ENCODE measurements at regions of chr12 and their contacts with region 1.

Region 1: DNA sequence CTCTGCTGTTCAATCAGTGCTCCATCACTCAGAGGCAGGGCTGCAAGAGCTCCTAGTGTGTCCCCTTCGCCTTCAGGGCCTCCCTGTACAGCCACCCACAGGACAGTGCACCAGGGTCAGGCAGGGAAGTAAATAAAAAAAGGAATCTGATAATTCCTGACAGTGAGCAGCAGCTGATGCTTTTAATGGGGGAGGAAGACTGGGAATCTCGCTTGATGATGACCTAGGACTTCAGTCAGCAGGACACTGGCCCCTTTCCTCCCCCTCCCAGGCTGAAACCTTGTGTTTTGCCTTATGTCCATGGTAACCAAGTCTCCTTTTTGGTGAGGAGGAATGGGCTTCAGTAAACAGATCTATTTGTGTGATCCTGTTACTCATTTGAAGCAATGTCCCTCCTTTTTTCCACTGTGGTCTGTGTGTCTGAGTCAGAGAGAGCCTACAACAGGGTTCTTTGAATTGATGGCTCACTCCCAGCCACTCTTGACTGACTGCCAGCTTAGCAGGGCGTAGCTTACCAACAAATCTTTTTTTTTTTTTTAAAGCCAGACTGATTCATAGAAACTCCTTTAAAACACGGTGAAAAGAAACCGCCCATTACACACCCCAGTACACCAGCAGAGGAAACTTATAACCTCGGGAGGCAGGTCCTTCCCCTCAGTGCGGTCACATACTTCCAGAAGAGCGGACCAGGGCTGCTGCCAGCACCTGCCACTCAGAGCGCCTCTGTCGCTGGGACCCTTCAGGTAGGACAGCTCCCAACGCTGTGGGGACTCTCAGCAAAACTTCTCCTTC is at the start of gene EMP1:
- DNase-seq: peak; percentile 32
- ATAC-seq: peak; percentile 92
- H3K4me3 Mint-ChIP-seq: peak within 1 kb of the TSS; percentile 75
- H3K27ac Mint-ChIP-seq: peak within 1 kb of the TSS; percentile 50
- H3K4me1 Mint-ChIP-seq: peaks cover 31% of the 10 kb centered on the region
- H3K27me3 Mint-ChIP-seq: peaks cover 38% of the 10 kb centered on the region
- CTCF ChIP-seq: no peak
- total RNA-seq, gene EMP1: 0.39 TPM in 1 of 2 replicates, not detected in the other

Region 2: GRCh38 chr12:11958221-11959091 is 1237.9 kb before region 1 on chr12:
- CTCF ChIA-PET with region 1: no interaction called
- POLR2A ChIA-PET with region 1: no interaction called
- intact Hi-C with region 1: no loop called
- DNase-seq: no peak
- ATAC-seq: no peak
- H3K4me3 Mint-ChIP-seq: no peak overlapping the region
- H3K27ac Mint-ChIP-seq: no peak overlapping the region
- H3K4me1 Mint-ChIP-seq: peaks cover 3% of the 10 kb centered on the region
- H3K27me3 Mint-ChIP-seq: peaks cover 13% of the 10 kb centered on the region
- CTCF ChIP-seq: no peak

Region 3: DNA sequence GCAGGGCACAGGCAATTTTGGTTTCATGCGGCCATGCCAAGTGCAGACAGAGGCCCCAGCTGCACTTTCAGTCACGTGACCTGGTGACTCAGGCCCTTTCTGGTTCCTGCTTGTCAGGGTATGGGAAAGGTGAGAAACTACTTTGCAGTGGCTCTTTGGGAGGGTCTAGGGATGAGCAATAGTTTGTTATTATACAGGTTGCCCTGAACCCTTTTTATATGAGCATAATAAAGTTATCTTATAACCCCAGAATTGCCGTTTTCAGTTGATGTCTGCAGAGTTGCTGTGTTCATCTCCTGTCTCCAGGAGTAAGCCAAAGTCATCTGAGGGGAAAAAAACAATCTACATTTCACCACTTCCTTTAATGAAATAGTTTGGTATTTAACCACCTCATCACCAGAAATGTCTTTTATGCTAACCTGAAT is 30.7 kb before region 1 on chr12:
- CTCF ChIA-PET with region 1: no interaction called
- POLR2A ChIA-PET with region 1: no interaction called
- intact Hi-C with region 1: loop called (anchors 1 kb)
- DNase-seq: peak; percentile 30
- ATAC-seq: peak; percentile 94
- H3K4me3 Mint-ChIP-seq: no peak overlapping the region
- H3K27ac Mint-ChIP-seq: peak overlapping the region; percentile 22
- H3K4me1 Mint-ChIP-seq: peaks cover 17% of the 10 kb centered on the region
- H3K27me3 Mint-ChIP-seq: peaks cover 6% of the 10 kb centered on the region
- CTCF ChIP-seq: no peak

Region 4: DNA sequence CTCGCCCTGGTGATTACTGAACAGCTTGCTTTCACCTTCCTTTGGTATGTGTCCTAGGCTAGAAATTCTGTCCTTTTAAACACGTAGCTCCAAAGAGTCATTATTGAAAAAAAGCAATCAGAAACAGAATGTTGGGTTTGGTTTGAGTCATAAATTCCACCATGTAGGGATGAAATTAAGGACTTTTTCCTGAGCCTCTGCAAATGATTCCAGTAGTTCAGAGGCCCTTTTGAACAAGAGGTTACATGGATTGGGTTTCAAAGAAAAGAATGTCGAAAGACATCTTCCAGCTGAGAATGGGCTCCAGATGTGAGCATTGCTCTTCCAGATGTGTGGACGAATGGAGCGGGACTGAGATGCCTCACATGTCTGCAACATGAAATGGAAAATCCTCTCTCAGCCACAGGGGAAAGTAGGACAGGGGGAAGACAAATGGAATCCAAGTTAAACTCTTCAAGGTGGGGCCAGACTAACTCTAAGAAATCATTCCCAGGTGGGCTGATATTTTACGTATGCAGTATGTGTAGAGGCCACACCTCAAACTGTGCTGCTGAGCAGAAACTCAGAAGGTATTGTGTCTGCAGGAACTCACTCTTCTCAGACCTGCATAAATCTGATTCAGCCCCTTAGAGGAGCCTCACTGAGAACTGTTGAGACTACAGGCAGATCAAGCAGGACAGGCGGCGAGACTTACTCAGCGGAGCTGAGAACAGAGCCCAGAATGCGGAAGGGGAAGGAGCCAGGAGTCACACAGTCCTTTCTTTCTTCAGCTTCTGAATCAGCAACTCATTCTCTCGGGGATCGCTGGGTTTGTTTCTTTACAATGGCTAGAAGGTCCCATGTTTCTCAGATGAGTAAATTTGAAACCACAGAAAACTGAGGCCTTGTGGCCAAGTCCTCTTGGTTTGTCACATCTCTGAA is 23.1 kb before region 1 on chr12:
- CTCF ChIA-PET with region 1: no interaction called
- POLR2A ChIA-PET with region 1: no interaction called
- intact Hi-C with region 1: loop called (anchors 1 kb)
- DNase-seq: peak; percentile 20
- ATAC-seq: peak; percentile 96
- H3K4me3 Mint-ChIP-seq: peak overlapping the region; percentile 35
- H3K27ac Mint-ChIP-seq: peak overlapping the region; percentile 18
- H3K4me1 Mint-ChIP-seq: peaks cover 22% of the 10 kb centered on the region
- H3K27me3 Mint-ChIP-seq: peaks cover 22% of the 10 kb centered on the region
- CTCF ChIP-seq: no peak

Region 5: GRCh38 chr12:13250416-13250815 is 54.1 kb after region 1 on chr12:
- CTCF ChIA-PET with region 1: no interaction called
- POLR2A ChIA-PET with region 1: no interaction called
- intact Hi-C with region 1: no loop called
- DNase-seq: no peak
- ATAC-seq: no peak
- H3K4me3 Mint-ChIP-seq: no peak overlapping the region
- H3K27ac Mint-ChIP-seq: no peak overlapping the region
- H3K4me1 Mint-ChIP-seq: no peaks in the 10 kb centered on the region
- H3K27me3 Mint-ChIP-seq: peaks cover 11% of the 10 kb centered on the region
- CTCF ChIP-seq: no peak

Measured in activated B cell treated with CpG ODN at 0.5 μM for 24 hours (primary cell).